ENCODE measurements at regions of chrX and their contacts with region 1.

Region 1: GRCh38 chrX:102599084-102599950 is at the start of gene ARMCX5:
- DNase-seq: peak; percentile 49
- H3K4me3 Mint-ChIP-seq: peak within 1 kb of the TSS; percentile 99
- H3K27ac Mint-ChIP-seq: peak within 1 kb of the TSS; percentile 95
- H3K4me1 Mint-ChIP-seq: peaks cover 17% of the 10 kb centered on the region
- H3K27me3 Mint-ChIP-seq: peaks cover 2% of the 10 kb centered on the region
- total RNA-seq, gene ARMCX5: 6.0 and 6.2 TPM in 2 replicates

Region 2: DNA sequence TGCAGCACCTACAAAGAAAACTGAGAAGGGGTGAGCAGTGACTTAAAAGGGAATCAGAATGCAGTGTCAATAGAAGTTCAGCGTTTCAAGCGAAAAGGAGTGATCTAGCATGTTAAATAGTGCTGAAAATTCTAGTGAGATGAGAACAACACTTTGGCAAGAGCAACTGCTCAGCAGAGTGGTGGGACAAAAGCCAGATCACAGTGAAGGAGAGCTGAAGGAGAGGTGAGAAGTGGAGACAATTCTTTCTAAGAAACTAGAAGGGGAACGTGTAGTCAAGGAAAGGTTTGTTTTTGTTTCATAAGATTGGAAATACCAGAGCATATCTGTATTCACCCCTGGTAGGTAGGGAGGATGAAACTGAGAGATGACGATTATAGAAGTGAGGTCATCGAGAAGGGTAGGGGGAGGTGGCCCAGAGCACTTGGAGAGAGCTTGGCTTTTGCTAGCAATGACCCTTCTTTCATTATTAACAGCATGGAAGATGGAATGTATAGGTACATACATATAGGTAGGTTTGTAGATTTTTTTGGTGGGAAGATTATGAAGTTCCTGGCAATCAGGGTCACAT is 1921.6 kb before region 1 on chrX:
- intact Hi-C with region 1: no loop called
- DNase-seq: no peak
- H3K4me3 Mint-ChIP-seq: no peak overlapping the region
- H3K27ac Mint-ChIP-seq: no peak overlapping the region
- H3K4me1 Mint-ChIP-seq: no peaks in the 10 kb centered on the region
- H3K27me3 Mint-ChIP-seq: peaks cover 11% of the 10 kb centered on the region

Region 3: DNA sequence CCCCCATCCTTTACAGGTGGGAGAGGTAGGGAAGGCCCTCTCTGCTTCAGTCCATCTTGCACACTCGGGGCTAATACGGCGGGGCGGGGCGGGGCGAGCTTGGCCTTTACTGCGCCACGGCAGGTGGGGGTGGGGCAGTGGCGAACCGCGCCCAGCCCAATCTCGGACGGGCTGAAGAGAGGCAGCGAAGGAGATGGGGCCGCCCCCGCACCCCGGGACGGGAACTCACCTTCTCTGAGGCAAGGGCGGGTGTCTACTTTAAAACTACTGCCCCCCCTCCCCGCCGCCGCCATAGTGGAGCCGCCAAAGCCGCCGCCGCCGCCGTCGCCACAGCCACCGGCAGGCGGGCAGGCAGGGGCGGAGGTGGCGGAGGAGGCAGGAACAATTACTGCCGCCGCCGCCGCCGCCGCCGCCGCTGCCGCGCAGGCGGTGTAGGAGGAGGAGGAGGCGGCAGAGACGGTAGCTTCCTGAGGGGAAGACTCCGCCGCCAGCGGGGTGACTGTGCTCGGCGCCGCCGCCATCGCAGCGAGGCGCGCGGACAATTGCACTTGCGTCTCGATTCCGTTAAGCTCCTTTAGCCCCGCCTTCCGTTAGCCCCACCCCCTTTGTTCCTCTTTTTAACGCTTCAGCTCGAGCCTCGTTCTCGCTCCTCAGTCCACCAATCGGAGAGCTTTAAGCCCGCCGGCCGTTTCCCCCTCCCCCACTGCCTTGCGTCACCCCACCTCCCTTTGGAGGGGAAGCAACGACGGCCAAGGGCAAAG is 667.6 kb before region 1 on chrX and contains the start of gene ZMAT1:
- intact Hi-C with region 1: loop called (anchors 5 kb)
- DNase-seq: peak; percentile 76
- H3K4me3 Mint-ChIP-seq: peak within 1 kb of the TSS; percentile 76
- H3K27ac Mint-ChIP-seq: peak within 1 kb of the TSS; percentile 83
- H3K4me1 Mint-ChIP-seq: peaks cover 13% of the 10 kb centered on the region
- H3K27me3 Mint-ChIP-seq: peaks cover 1% of the 10 kb centered on the region
- total RNA-seq, gene ZMAT1: 0.62 and 0.83 TPM in 2 replicates

Region 4: GRCh38 chrX:102515975-102516941 is 83.1 kb before region 1 on chrX and contains the start of gene TMSB15A:
- intact Hi-C with region 1: loop called (anchors 2 kb)
- DNase-seq: peak; percentile 8
- H3K4me3 Mint-ChIP-seq: peak within 1 kb of the TSS; percentile 77
- H3K27ac Mint-ChIP-seq: no peak within 1 kb of the TSS
- H3K4me1 Mint-ChIP-seq: peaks cover 16% of the 10 kb centered on the region
- H3K27me3 Mint-ChIP-seq: peaks cover 23% of the 10 kb centered on the region
- total RNA-seq, gene TMSB15A: not detected in 2 replicates

Region 5: GRCh38 chrX:102546828-102547493 is 52.4 kb before region 1 on chrX:
- intact Hi-C with region 1: loop called (anchors 10 kb)
- DNase-seq: peak; percentile 0
- H3K4me3 Mint-ChIP-seq: peak overlapping the region; percentile 86
- H3K27ac Mint-ChIP-seq: peak overlapping the region; percentile 34
- H3K4me1 Mint-ChIP-seq: no peaks in the 10 kb centered on the region
- H3K27me3 Mint-ChIP-seq: peaks cover 3% of the 10 kb centered on the region

Region 6: DNA sequence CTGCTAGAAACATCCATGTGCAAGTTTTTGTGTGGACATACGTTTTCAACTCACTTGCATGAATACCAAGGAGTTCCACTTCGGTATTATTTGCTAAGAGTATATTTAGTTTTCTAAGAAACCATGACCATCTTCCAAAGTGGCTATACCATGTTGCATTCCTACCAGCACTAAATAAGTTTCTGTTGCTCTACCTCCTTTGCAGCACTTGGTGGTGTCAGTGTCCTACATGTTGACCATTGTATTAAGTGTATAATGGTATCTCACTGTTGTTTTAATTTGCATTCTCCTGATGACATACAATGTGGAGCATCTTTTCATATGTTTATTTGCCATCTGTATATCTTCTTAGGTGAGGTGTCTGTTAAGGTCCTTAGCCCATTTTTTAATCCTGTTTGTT is 44.0 kb after region 1 on chrX:
- intact Hi-C with region 1: no loop called
- DNase-seq: no peak
- H3K4me3 Mint-ChIP-seq: no peak overlapping the region
- H3K27ac Mint-ChIP-seq: no peak overlapping the region
- H3K4me1 Mint-ChIP-seq: no peaks in the 10 kb centered on the region
- H3K27me3 Mint-ChIP-seq: no peaks in the 10 kb centered on the region

Region 7: GRCh38 chrX:102659790-102660757 is 60.8 kb after region 1 on chrX:
- intact Hi-C with region 1: loop called (anchors 1 kb)
- DNase-seq: peak; percentile 68
- H3K4me3 Mint-ChIP-seq: peak overlapping the region; percentile 92
- H3K27ac Mint-ChIP-seq: peak overlapping the region; percentile 76
- H3K4me1 Mint-ChIP-seq: peaks cover 8% of the 10 kb centered on the region
- H3K27me3 Mint-ChIP-seq: peaks cover 6% of the 10 kb centered on the region

Region 8: DNA sequence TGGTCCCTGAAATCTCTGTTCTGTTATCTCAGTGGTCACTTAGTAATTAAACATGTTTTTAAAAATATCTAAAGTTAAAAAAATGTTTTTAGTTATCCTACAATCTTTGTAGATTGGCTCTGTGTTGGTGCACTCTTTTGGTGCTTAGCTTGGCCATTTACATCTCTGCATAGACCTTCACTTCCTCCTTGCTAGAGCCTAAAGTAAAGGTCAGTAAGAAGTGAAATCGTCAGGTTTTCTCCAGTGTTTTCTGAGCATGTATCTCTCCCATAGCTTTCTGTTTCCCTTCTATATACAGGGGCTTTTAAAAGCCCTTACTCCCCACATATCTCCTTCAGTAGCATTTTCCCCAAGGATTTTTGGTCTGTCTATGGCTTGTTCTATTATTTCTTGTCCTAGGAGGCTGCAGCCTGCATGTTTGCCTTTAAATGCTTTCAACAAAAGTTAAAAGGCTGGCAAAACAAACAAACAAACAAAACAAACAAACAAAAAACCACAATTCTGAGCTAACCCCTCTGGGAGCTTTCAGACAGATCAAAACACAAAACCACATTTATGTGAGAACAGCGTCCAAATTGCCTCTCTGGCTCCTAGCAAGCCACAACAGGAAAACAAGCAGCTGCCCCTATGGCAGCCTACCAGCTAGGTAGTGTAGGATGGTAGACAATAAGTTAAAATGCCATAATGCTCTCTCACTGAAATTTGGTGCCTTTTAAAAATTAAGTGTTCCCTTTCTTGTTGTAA is 85.6 kb after region 1 on chrX:
- intact Hi-C with region 1: no loop called
- DNase-seq: no peak
- H3K4me3 Mint-ChIP-seq: no peak overlapping the region
- H3K27ac Mint-ChIP-seq: no peak overlapping the region
- H3K4me1 Mint-ChIP-seq: no peaks in the 10 kb centered on the region
- H3K27me3 Mint-ChIP-seq: no peaks in the 10 kb centered on the region

Region 9: DNA sequence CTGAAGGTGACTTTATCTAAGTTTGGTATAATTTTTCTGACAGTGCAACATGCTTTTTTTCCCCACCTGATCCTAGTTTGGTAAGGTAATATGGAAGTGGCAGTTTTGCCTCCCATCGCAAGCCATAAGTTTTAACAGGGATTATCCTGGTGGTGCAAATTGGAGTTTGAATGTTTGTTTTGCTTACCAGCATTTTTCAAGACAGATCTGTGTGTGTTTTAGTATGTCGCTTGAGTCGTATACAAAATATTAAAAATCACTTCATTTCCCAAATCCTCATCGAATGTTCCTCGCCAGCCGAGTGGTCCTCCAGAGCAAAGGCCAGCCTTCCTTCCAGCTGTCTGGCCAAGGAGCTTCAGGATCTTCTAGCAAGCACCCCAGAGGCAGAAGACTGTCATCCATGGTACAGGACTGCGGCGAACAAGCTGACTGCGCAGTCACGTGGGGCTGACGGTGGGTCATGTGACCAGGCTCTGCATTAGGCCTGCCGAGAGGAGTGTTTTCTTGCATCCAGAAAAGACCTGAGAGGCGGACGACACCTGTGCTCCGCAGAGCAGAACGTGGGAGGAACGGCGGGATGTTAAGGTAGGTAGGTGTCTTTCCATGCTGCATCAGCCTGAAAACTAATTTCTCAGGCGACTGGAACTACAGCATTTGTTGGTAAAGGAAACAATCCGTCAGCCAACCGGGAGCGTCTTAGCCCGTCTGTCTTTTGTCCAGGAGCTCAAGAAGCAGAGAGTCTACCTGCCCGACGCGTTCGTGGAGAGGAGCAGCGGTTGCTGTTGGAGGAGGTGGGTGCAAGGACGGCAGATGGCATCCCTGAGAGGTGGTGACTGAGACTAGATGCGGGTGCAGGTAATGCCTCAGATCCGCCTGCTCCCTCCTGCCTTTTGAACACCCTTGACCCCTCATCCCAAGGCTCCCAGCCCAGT is 121.2 kb after region 1 on chrX and contains the start of gene GPRASP3:
- intact Hi-C with region 1: loop called (anchors 2 kb)
- DNase-seq: peak; percentile 56
- H3K4me3 Mint-ChIP-seq: peak within 1 kb of the TSS; percentile 88
- H3K27ac Mint-ChIP-seq: peak within 1 kb of the TSS; percentile 88
- H3K4me1 Mint-ChIP-seq: peaks cover 11% of the 10 kb centered on the region
- H3K27me3 Mint-ChIP-seq: no peaks in the 10 kb centered on the region
- total RNA-seq, gene GPRASP3: 0.65 and 0.88 TPM in 2 replicates

Region 10: DNA sequence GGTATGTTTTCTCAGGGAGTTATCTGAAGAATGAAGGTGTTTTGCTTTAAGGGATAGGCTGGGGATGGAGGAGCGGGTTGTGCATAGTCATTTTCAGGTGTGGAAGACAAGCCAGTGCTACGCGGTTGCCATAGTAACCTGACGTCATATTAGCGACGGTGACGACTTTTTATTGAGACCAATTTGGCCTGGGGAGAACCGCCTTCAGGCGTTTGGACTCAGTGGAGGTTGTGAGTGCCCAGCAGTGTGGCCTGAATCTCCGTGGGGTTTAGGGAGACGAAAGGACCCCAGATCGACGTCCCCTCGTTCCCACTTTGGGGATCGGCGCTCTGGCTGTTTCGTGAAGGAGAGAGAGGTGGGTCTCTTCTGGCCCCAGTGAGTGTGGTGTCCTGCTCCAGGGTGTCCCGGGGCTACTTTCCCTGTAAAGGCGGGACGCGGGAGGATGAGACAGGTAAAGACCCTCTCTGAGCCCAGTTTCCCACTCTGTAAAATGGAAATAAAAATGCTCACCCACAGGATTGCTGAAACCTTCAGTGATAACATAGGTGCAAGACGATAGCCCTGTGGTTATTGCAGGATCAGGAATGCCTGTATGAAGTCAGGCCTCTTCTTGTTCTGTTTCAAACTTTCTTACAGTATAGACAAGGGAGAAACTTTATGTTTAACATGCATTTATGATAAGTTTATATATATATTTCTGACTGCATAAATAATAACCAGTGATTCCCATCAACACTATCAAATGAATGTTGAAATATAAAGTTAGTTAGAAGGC is 169.9 kb after region 1 on chrX:
- intact Hi-C with region 1: loop called (anchors 1 kb)
- DNase-seq: peak; percentile 78
- H3K4me3 Mint-ChIP-seq: peak overlapping the region; percentile 92
- H3K27ac Mint-ChIP-seq: peak overlapping the region; percentile 96
- H3K4me1 Mint-ChIP-seq: peaks cover 12% of the 10 kb centered on the region
- H3K27me3 Mint-ChIP-seq: no peaks in the 10 kb centered on the region

Measured in activated T-helper 1 cell treated with anti-CD3 and anti-CD28 coated beads, Interleukin-12 subunit alpha, Interleukin-12 subunit beta, Interleukin-2, Interleukin-4 antibody, amounts not matched to agents 30 ng/mL and 10 ng/mL and 1 ng/mL, durations not matched to agents 14 hours and 24 hours and 36 hours (primary cell).